HEK293T (cell line): ENCODE measurements at regions of chr2 and their contacts with region 1.

Region 1: DNA sequence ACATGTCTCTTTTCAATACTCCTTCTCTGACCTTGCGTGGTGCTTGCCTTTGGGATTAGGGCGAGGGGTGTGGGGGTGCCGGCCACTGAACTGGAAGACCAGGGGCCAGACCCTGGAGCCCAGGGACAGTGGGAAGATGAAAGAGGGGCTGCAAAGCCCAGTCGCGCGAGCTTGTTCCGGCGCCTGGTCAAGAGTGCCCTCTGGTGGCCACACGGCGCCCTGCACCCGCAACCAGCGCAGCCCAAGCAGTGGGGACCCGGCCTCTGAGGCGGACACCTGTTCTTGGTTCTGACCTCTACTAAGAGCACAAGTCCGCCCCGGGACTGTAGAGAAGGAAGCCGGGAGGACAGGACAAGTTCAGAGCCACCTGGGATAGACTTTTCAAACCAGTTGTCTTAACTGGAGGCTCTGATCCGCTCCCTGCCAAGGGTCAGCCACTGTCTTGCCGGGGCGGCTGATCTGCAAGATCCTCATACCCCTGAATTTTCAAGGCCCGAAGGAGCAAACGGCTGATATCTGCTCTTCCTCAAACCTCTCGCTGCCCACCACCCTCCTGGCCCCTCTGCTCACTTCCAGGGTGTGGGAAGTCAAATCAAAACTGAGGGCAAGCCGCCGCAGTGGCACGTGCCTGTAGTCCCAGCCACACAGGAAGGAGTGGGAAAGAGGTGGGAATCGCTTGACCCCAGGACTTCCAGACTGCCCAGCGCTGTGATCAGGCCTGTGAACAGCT is 14.9 kb upstream of the MSH6 start:
- DNase-seq: peak; percentile 79

Region 2: GRCh38 chr2:47437287-47437686 is 330.8 kb before region 1 on chr2:
- CTCF ChIA-PET with region 1: interaction called, 16 read pairs
- POLR2A ChIA-PET with region 1: no interaction called
- DNase-seq: no peak

Region 3: DNA sequence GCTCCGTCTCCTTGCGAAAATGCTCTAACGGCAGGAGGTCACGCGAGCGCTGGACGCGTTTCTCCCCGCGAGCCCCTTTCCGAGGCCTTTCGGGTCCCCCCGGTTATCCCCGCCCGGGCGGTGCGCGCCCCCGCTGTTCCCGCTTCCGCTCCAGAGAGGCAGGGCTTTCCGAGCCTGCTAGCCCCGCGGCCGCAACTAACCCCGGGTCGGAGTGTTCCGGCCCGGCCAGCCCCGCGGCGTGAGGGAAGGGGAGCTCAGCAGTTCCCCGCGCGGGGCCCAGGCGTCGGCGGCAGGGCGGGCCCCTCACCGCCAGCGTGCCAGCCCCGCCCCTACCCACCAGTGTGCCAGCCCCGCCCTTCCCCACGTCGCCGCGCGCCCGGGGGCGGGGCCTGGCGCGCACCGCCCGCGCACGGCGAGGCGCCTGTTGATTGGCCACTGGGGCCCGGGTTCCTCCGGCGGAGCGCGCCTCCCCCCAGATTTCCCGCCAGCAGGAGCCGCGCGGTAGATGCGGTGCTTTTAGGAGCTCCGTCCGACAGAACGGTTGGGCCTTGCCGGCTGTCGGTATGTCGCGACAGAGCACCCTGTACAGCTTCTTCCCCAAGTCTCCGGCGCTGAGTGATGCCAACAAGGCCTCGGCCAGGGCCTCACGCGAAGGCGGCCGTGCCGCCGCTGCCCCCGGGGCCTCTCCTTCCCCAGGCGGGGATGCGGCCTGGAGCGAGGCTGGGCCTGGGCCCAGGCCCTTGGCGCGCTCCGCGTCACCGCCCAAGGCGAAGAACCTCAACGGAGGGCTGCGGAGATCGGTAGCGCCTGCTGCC is 14.8 kb after region 1 on chr2 and contains the start of gene MSH6:
- CTCF ChIA-PET with region 1: interaction called, 3 read pairs
- POLR2A ChIA-PET with region 1: interaction called, 11 read pairs
- DNase-seq: peak; percentile 94